ENCODE measurements at regions of chr17 and their contacts with region 1.

Region 1: GRCh38 chr17:40615295-40615988 is 32.2 kb downstream of the SMARCE1 start:
- DNase-seq: no peak
- H3K4me3 Mint-ChIP-seq: no peak overlapping the region
- H3K27ac Mint-ChIP-seq: peak overlapping the region; percentile 2
- H3K4me1 Mint-ChIP-seq: peaks cover 59% of the 10 kb centered on the region
- H3K27me3 Mint-ChIP-seq: peaks cover 3% of the 10 kb centered on the region

Region 2: GRCh38 chr17:40598663-40599467 is 16.6 kb before region 1 on chr17:
- CTCF ChIA-PET with region 1: interaction called, 15 read pairs
- POLR2A ChIA-PET with region 1: interaction called, 11 read pairs
- DNase-seq: peak; percentile 61
- H3K4me3 Mint-ChIP-seq: peak overlapping the region; percentile 44
- H3K27ac Mint-ChIP-seq: peak overlapping the region; percentile 97
- H3K4me1 Mint-ChIP-seq: peaks cover 69% of the 10 kb centered on the region
- H3K27me3 Mint-ChIP-seq: no peaks in the 10 kb centered on the region

Region 3: GRCh38 chr17:40663252-40663651 is 47.8 kb after region 1 on chr17:
- CTCF ChIA-PET with region 1: no interaction called
- POLR2A ChIA-PET with region 1: no interaction called
- DNase-seq: no peak
- H3K4me3 Mint-ChIP-seq: no peak overlapping the region
- H3K27ac Mint-ChIP-seq: no peak overlapping the region
- H3K4me1 Mint-ChIP-seq: peaks cover 7% of the 10 kb centered on the region
- H3K27me3 Mint-ChIP-seq: peaks cover 49% of the 10 kb centered on the region

Region 4: DNA sequence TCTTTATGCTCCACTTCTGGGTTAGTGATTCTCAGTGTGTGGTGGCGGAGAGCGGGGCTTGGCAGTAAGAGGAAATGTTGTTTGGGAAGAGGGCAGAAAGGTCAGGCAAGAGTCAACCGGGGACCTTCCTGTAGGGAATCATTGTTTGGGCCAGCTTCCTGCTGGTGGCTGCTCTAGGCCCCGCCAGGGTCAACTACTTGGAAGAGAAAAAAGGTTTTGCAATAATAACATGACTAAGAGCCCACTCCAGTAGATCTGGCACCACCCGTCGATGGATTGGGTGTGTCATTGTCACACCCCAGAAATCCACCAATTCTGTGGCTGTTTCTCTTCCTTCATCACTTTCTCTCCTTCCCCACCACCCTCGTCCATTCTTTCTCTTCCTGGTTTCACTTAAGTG is 92.3 kb after region 1 on chr17:
- CTCF ChIA-PET with region 1: no interaction called
- POLR2A ChIA-PET with region 1: no interaction called
- DNase-seq: no peak
- H3K4me3 Mint-ChIP-seq: no peak overlapping the region
- H3K27ac Mint-ChIP-seq: no peak overlapping the region
- H3K4me1 Mint-ChIP-seq: no peaks in the 10 kb centered on the region
- H3K27me3 Mint-ChIP-seq: peaks cover 35% of the 10 kb centered on the region

Region 5: GRCh38 chr17:40909351-40909750 is 293.9 kb after region 1 on chr17:
- CTCF ChIA-PET with region 1: no interaction called
- POLR2A ChIA-PET with region 1: no interaction called
- DNase-seq: peak; percentile 53
- H3K4me3 Mint-ChIP-seq: no peak overlapping the region
- H3K27ac Mint-ChIP-seq: no peak overlapping the region
- H3K4me1 Mint-ChIP-seq: no peaks in the 10 kb centered on the region
- H3K27me3 Mint-ChIP-seq: peaks cover 33% of the 10 kb centered on the region